IMR-90 (cell line): ENCODE measurements at regions of chr1 and their contacts with region 1.

Region 1: GRCh38 chr1:170518965-170519364 is 13.0 kb upstream of the GORAB start:
- DNase-seq: no peak
- ATAC-seq: no peak; the same call in 1 of the 2 replicates
- H3K4me3 ChIP-seq: no peak overlapping the region
- H3K27ac ChIP-seq: no peak overlapping the region
- H3K4me1 ChIP-seq: peaks cover 8% of the 10 kb centered on the region; the same call in 1 of the 2 replicates
- H3K27me3 ChIP-seq: no peaks in the 10 kb centered on the region
- CTCF ChIP-seq: no peak
- POLR2A ChIP-seq: no peak
- RAD21 ChIP-seq: no peak

Region 2: GRCh38 chr1:170168265-170168664 is 350.7 kb before region 1 on chr1:
- CTCF ChIA-PET with region 1: interaction called, 10 read pairs
- POLR2A ChIA-PET with region 1: no interaction called
- dilution Hi-C with region 1: no loop called
- in situ Hi-C with region 1: no loop called
- intact Hi-C with region 1: no loop called
- DNase-seq: peak; percentile 64
- ATAC-seq: peak; percentile 46; the same call in 1 of the 2 replicates
- H3K4me3 ChIP-seq: no peak overlapping the region
- H3K27ac ChIP-seq: no peak overlapping the region
- H3K4me1 ChIP-seq: 0 out of 2 replicates have a peak, but pooled peaks cover 2% of the 10 kb centered on the region
- H3K27me3 ChIP-seq: no peaks in the 10 kb centered on the region
- CTCF ChIP-seq: no peak
- POLR2A ChIP-seq: no peak
- RAD21 ChIP-seq: no peak